A549 (cell line): ENCODE measurements at regions of chr20 and their contacts with region 1.

Region 1: GRCh38 chr20:45373353-45374100 is 4.6 kb downstream of the TP53TG5 start:
- DNase-seq: peak; percentile 84 to 91
- ATAC-seq: peak; percentile 86 to 93
- H3K4me3 ChIP-seq: peak overlapping the region; percentile 43
- H3K27ac ChIP-seq: peak overlapping the region; percentile 40 to 73; a peak in 5 of 6 replicates
- H3K4me1 ChIP-seq: no peaks in the 10 kb centered on the region
- CTCF ChIP-seq: peak; percentile 94
- EP300 ChIP-seq: no peak
- POLR2A ChIP-seq: no peak
- RAD21 ChIP-seq: peak; percentile 87 to 89

Region 2: GRCh38 chr20:45355209-45356084 is 18.1 kb before region 1 on chr20:
- CTCF ChIA-PET with region 1: interaction called, 133 read pairs
- POLR2A ChIA-PET with region 1: no interaction called
- DNase-seq: peak in 1 of 2 experiments; percentile 36
- ATAC-seq: peak in 1 of 2 experiments; percentile 63; a peak in 3 of 6 replicates
- H3K4me3 ChIP-seq: no peak overlapping the region
- H3K27ac ChIP-seq: peak overlapping the region; percentile 35 to 65; a peak in 4 of 6 replicates
- H3K4me1 ChIP-seq: peaks cover 49% of the 10 kb centered on the region
- CTCF ChIP-seq: no peak
- EP300 ChIP-seq: no peak
- POLR2A ChIP-seq: no peak
- RAD21 ChIP-seq: no peak

Region 3: GRCh38 chr20:45400346-45401031 is 27.0 kb after region 1 on chr20:
- CTCF ChIA-PET with region 1: interaction called, 56 read pairs
- POLR2A ChIA-PET with region 1: no interaction called
- DNase-seq: no peak
- ATAC-seq: no peak
- H3K4me3 ChIP-seq: no peak overlapping the region
- H3K27ac ChIP-seq: no peak overlapping the region
- H3K4me1 ChIP-seq: peaks cover 2% of the 10 kb centered on the region; the same call in 1 of the 3 replicates
- CTCF ChIP-seq: no peak
- EP300 ChIP-seq: no peak
- POLR2A ChIP-seq: no peak
- RAD21 ChIP-seq: no peak

Region 4: DNA sequence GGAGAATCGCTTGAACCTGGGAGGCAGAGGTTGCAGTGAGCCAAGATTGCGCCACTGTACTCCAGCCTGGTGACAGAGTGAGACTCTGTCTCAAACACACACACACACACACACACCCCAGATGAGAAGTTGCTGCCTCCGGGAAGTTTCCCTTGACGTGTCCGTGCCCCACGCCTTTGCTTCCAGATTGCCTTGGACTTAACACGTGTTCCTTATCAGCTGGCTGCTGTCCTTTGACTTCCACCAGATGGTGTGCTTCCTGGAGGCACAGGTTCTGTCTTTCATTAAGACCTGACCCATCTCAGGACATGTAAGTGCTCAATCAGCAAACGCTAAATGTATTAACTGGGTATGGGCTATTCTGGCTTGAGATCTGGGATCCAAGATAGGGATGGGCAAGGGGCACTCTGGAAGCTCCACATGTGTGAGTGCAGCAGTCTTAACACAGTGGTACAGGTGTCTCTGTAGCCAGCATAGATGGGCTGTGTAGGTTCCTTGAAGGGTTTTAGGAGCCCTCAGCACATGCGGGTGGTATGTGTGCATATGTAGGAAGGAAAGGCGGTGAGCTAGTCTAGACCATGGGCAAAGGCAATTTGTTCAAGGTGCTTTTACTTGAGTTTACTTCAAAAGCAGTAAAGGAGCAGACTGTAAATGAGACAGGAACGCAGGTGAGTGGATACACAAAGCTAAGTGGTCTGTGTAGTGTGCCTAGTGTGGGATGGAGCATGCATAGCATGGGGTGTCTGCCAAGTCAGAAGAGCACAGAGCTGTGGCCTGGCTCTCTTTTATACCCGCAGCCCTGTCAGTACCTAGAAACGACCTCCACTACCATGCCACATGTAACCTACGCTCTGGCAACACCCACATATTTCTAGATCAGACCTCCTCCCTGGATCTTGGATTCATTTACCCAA is 54.0 kb after region 1 on chr20:
- CTCF ChIA-PET with region 1: interaction called, 240 read pairs
- POLR2A ChIA-PET with region 1: no interaction called
- DNase-seq: no peak
- ATAC-seq: peak; percentile 54 to 60; a peak in 5 of 6 replicates
- H3K4me3 ChIP-seq: no peak overlapping the region
- H3K27ac ChIP-seq: no peak overlapping the region
- H3K4me1 ChIP-seq: no peaks in the 10 kb centered on the region
- CTCF ChIP-seq: no peak
- EP300 ChIP-seq: no peak
- POLR2A ChIP-seq: no peak
- RAD21 ChIP-seq: no peak

Region 5: DNA sequence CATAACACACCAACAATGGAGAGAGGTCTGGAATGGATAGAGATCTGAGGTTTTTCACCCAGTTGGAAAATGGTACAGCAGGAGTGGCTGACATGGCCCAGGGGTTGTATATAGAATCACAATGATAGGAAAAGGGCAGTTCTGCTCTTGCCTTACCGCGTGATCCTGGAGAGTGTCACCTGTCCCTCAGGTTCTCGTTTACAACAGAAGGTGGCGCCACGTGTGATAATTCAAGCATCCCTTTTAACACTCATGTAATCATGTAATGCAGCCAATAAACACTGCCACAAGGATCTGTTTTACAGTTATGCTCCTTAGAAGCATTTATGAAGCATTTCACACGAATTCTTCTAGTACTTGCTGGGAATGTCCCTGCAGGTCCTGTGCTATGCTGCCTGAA is 83.1 kb after region 1 on chr20:
- CTCF ChIA-PET with region 1: interaction called, 111 read pairs
- POLR2A ChIA-PET with region 1: no interaction called
- DNase-seq: peak in 1 of 2 experiments; percentile 42
- ATAC-seq: peak; percentile 60 to 78; a peak in 4 of 6 replicates
- H3K4me3 ChIP-seq: no peak overlapping the region
- H3K27ac ChIP-seq: no peak overlapping the region
- H3K4me1 ChIP-seq: no peaks in the 10 kb centered on the region
- CTCF ChIP-seq: peak; percentile 22; the same call in 2 of the 3 replicates
- EP300 ChIP-seq: no peak
- POLR2A ChIP-seq: no peak
- RAD21 ChIP-seq: peak in 1 of 2 experiments; percentile 17; a peak in 1 of 5 replicates